Transverse colon (tissue), 4 donors: ENCODE measurements at regions of chr3 and their contacts with region 1.

Region 1: DNA sequence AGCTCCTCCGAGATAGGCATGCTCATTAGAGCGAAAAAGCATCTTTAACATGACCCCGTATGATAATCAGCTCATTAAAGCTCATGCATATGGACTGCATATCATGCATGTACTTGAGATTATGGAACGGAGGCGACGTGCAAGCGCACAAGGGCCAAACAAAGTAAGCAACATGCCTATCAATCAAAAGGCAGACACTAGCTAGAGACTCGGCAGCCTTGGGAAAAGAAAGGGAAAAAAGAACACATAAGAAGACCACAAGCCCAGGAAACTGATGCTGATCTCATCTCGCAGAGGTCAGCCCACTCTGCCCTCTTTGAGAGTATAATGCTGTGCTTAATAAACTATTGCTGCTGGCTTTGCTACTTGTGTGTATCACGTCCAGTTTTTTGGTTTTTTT is 2.6 kb upstream of the ACOX2 start:
- DNase-seq: no peak
- H3K4me3 ChIP-seq: no peak overlapping the region
- H3K27ac ChIP-seq: no peak overlapping the region
- H3K4me1 ChIP-seq: peaks cover 24 to 48% (median 33%) of the 10 kb centered on the region in 4 donors
- H3K27me3 ChIP-seq: no peaks in the 10 kb centered on the region
- CTCF ChIP-seq: no peak
- EP300 ChIP-seq: no peak
- POLR2A ChIP-seq: no peak

Region 2: GRCh38 chr3:56904552-56905215 is 1634.9 kb before region 1 on chr3:
- in situ Hi-C with region 1: no loop called
- intact Hi-C with region 1: no loop called
- DNase-seq: peak; percentile 22
- H3K4me3 ChIP-seq: no peak overlapping the region
- H3K27ac ChIP-seq: no peak overlapping the region
- H3K4me1 ChIP-seq: peaks cover 0 to 4% (median 0%) of the 10 kb centered on the region in 4 donors
- H3K27me3 ChIP-seq: no peaks in the 10 kb centered on the region
- CTCF ChIP-seq: no peak
- EP300 ChIP-seq: no peak
- POLR2A ChIP-seq: no peak

Region 3: GRCh38 chr3:57268416-57268815 is 1271.2 kb before region 1 on chr3:
- in situ Hi-C with region 1: no loop called
- intact Hi-C with region 1: loop called (anchors 10 kb)
- DNase-seq: no peak
- H3K4me3 ChIP-seq: no peak overlapping the region
- H3K27ac ChIP-seq: no peak overlapping the region
- H3K4me1 ChIP-seq: no peaks in the 10 kb centered on the region
- H3K27me3 ChIP-seq: no peaks in the 10 kb centered on the region
- CTCF ChIP-seq: no peak
- EP300 ChIP-seq: no peak
- POLR2A ChIP-seq: no peak

Region 4: DNA sequence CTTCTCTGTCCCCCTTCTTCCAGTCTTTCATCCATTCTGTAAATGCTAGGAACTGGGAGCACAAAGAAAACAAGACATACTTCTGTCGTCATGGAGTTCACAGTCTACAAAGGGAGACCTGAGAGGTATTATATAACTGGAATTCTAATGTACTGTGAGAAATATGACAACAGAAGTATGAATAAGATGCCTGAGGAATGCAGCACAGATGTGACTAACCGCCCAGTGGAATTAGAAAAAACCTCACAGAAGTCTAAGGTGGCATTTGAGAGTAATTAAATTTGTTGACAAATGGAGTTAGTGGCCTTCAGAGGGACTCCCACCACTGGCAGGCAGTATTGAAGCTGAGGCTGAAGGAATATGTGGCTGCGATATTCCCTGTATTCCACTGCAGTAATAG is 295.5 kb after region 1 on chr3:
- in situ Hi-C with region 1: no loop called
- intact Hi-C with region 1: no loop called
- DNase-seq: no peak
- H3K4me3 ChIP-seq: no peak overlapping the region
- H3K27ac ChIP-seq: no peak overlapping the region
- H3K4me1 ChIP-seq: no peaks in the 10 kb centered on the region
- H3K27me3 ChIP-seq: no peaks in the 10 kb centered on the region
- CTCF ChIP-seq: no peak
- EP300 ChIP-seq: no peak
- POLR2A ChIP-seq: no peak